Mammary epithelial cell (primary cell): ENCODE measurements at regions of chr14 and their contacts with region 1.

Region 1: GRCh38 chr14:24058260-24058950 is 6.6 kb downstream of the CARMIL3 start:
- DNase-seq: peak; percentile 50
- H3K4me3 ChIP-seq: no peak overlapping the region
- H3K27ac ChIP-seq: no peak overlapping the region
- H3K4me1 ChIP-seq: no peaks in the 10 kb centered on the region
- H3K27me3 ChIP-seq: peaks cover 7% of the 10 kb centered on the region
- CTCF ChIP-seq: peak; percentile 57 to 62

Region 2: DNA sequence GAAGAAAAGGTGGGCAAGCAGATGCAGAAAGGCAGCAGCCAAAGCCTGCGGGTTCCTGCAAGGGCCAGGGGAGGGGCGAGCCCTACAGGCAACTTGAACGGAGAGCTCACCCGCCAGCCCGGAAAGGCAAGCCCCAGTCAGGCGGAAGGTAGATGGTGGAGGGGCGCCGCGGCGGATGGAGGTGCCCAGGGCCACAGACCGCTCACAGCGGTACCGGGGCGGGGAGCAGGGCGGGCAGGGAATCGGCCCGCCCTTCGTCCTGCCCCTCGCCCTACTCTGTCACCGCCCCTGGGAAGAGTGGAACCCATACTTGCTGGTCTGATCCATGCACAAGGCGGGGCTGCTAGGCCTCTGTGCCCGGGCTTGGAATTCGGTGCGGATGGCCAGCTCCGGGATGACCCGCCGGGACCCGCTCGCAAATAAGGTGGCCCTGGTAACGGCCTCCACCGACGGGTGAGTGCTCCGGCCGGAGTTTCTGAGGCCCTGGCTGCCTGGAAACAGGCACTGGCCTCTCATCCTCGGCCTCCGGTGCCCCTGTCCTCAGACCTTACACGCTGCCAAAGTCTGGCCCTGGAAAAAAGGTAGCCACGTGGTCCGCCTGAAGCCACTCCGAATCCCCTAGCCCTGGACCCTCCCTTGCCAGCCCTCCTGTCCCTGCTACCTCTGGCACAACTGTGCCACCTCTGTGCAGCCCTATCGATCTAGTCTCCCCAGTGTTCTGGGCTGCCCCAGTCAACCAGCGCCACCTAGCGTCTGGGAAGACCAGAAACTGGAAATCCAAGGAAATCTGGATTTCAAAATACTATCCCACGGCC is 104.7 kb before region 1 on chr14 and contains the start of gene DHRS4:
- CTCF ChIA-PET with region 1: no interaction called
- dilution Hi-C with region 1: no loop called
- in situ Hi-C with region 1: no loop called
- intact Hi-C with region 1: no loop called
- DNase-seq: peak; percentile 86
- H3K4me3 ChIP-seq: peak within 1 kb of the TSS; percentile 54 to 82 (median 68)
- H3K27ac ChIP-seq: peak within 1 kb of the TSS; percentile 52
- H3K4me1 ChIP-seq: no peaks in the 10 kb centered on the region
- H3K27me3 ChIP-seq: no peaks in the 10 kb centered on the region
- CTCF ChIP-seq: peak; percentile 75 to 93
- total RNA-seq, gene DHRS4: 25.0 to 30.9 TPM

Region 3: DNA sequence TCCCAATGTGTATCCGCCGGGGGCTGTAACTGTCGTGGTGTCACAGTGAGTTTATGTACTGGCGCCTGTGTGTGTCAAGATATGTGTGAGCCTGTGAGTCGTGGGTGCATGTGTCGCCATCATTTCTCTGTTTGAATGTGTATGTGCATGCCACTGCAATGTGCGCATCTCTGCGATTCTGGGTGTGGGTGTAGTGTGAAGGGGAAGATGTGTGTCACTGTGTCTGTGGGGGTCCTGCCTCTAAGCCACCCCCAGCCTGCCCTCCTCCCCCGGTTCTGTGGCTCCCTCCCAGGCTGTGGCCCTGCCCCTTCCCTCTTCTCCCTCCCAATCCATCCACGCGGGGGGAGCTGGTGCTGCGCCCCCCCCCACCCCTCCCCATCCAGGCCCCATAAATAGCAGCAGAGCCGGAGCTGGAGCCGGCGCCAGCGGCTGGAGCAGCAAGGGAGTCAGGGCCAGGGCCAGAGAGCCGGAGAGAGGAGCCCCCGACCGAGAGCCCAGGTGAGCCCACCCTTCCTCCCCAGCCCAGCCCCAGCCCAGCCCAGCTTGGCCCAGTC is 12.8 kb after region 1 on chr14 and contains the start of gene CPNE6:
- CTCF ChIA-PET with region 1: no interaction called
- dilution Hi-C with region 1: no loop called
- in situ Hi-C with region 1: no loop called
- intact Hi-C with region 1: no loop called
- DNase-seq: no peak
- H3K4me3 ChIP-seq: no peak within 1 kb of the TSS
- H3K27ac ChIP-seq: no peak within 1 kb of the TSS
- H3K4me1 ChIP-seq: no peaks in the 10 kb centered on the region
- H3K27me3 ChIP-seq: peaks cover 4% of the 10 kb centered on the region
- CTCF ChIP-seq: no peak
- total RNA-seq, gene CPNE6: not detected

Region 4: DNA sequence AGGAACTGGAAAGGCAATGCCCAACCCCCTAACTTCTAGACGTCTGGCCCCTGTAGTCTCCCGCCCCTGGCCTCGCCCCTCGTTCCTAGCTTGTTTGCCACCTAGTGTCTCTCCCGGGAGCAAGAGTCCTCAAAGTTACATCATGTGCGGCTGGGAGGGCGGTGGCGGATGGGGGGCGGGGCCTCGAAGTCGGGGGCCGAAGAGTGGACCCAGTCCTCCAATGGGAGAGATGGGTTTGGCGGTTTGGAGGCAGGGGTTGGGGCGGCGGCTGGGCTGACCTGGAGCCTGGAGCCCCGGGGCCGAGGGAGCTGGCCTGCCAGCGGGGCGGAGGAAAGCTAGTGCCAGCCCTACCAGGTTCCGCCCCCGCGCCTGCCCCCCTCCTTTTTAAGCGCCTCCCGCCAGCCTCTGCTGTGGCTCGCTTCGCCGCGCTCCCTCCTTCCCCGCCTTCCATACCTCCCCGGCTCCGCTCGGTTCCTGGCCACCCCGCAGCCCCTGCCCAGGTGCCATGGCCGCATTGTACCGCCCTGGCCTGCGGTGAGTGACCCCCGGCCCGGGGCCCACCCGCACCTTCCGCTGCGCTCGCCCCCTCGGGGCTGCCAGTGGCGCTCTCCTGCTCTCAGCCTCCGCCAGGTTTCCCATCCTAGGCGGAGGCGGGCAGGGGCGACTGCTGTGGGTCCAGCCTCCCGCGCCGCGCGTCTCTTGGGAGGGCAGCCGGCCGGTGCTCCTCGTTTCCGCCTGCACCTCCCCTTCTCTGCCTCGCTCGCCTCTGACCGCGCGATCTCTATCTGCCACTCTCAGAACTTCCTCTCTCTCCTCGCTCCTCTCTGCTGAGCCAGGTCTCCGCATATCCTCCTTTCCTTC is 35.7 kb after region 1 on chr14 and contains the start of gene PCK2:
- CTCF ChIA-PET with region 1: interaction called, 13 read pairs
- dilution Hi-C with region 1: loop called (anchors 5 kb)
- in situ Hi-C with region 1: loop called in 1 of 2 experiments (anchors 5 kb)
- intact Hi-C with region 1: loop called (anchors 1 kb)
- DNase-seq: peak; percentile 88
- H3K4me3 ChIP-seq: peak within 1 kb of the TSS; percentile 67 to 86 (median 77)
- H3K27ac ChIP-seq: peak within 1 kb of the TSS; percentile 54
- H3K4me1 ChIP-seq: peaks cover 12% of the 10 kb centered on the region
- H3K27me3 ChIP-seq: no peaks in the 10 kb centered on the region
- CTCF ChIP-seq: peak in 1 of 2 donors; percentile 6
- total RNA-seq, gene PCK2: 55.5 to 129 TPM

Region 5: GRCh38 chr14:24108336-24108874 is 50.0 kb after region 1 on chr14:
- CTCF ChIA-PET with region 1: interaction called, 9 read pairs
- dilution Hi-C with region 1: no loop called
- in situ Hi-C with region 1: no loop called
- intact Hi-C with region 1: loop called (anchors 1 kb)
- DNase-seq: no peak
- H3K4me3 ChIP-seq: no peak overlapping the region
- H3K27ac ChIP-seq: no peak overlapping the region
- H3K4me1 ChIP-seq: peaks cover 21% of the 10 kb centered on the region
- H3K27me3 ChIP-seq: no peaks in the 10 kb centered on the region
- CTCF ChIP-seq: no peak

Region 6: DNA sequence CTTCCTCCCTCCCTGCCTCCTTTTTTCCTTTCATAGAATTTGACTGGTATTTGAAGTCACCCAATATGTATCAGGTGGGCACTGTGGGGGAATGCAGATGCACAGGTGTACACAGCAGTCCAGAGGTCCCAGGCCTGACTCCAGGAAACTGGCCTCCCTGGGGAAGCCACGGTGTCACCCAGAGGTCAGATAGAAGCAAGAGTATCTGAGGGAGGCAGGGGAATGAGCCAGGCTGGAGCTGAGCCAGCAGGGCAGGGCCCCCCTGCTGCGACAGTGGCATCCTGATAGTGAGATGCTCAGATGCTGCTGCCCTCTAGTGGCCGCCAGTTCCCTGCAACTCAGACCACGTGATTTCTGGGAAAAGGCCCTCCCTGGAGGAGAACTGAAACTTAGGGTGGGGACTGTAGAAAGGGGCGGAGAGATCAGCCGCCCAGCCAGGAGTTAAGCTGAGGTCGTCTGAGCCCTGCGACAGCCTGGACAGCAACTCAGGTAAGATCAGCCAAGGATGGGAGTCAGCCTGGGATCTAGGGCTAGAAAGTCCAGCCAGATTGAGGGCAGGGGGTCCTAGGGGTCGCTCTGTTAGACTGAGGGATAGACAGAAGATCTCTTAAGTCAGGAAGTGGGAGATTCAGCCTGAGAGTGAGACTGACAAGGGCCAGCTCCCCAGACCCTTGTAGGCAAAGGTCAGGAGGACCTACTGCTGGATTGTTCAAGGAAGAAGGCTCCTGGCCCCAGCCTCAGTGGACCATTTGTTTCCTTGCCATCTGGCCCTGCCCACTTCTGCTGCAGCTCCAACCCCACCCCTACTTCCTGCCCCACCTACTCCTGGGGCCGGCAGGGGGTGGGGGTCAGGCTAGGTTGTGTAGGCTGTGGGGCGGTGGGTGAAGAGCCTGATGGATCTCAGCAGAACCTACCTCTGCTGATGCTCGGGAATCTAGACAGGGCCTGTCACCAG is 102.7 kb after region 1 on chr14 and contains the start of gene IRF9:
- CTCF ChIA-PET with region 1: no interaction called
- dilution Hi-C with region 1: no loop called
- in situ Hi-C with region 1: no loop called
- intact Hi-C with region 1: loop called (anchors 1 kb)
- DNase-seq: peak; percentile 83
- H3K4me3 ChIP-seq: peak within 1 kb of the TSS; percentile 58 to 67 (median 58)
- H3K27ac ChIP-seq: peak within 1 kb of the TSS; percentile 46
- H3K4me1 ChIP-seq: peaks cover 9% of the 10 kb centered on the region
- H3K27me3 ChIP-seq: no peaks in the 10 kb centered on the region
- CTCF ChIP-seq: peak; percentile 93 to 98
- total RNA-seq, gene IRF9: 43.0 to 45.7 TPM

Region 7: GRCh38 chr14:24310646-24311604 is 252.5 kb after region 1 on chr14 and contains the start of gene LTB4R:
- CTCF ChIA-PET with region 1: no interaction called
- dilution Hi-C with region 1: no loop called
- in situ Hi-C with region 1: no loop called
- intact Hi-C with region 1: loop called (anchors 1 kb)
- DNase-seq: peak; percentile 70
- H3K4me3 ChIP-seq: peak within 1 kb of the TSS in 2 of 3 experiments; percentile 33 to 35
- H3K27ac ChIP-seq: peak within 1 kb of the TSS; percentile 5
- H3K4me1 ChIP-seq: peaks cover 52% of the 10 kb centered on the region
- H3K27me3 ChIP-seq: no peaks in the 10 kb centered on the region
- CTCF ChIP-seq: peak in 1 of 2 donors; percentile 32
- total RNA-seq, gene LTB4R: 6.8 to 25.5 TPM